ENCODE measurements at regions of chr3 and their contacts with region 1.

Region 1: GRCh38 chr3:58177747-58178527 is 32.8 kb downstream of the DNASE1L3 start:
- DNase-seq: peak; percentile 91
- ATAC-seq: peak; percentile 94
- H3K4me3 Mint-ChIP-seq: peak overlapping the region; percentile 62
- H3K27ac Mint-ChIP-seq: no peak overlapping the region
- H3K4me1 Mint-ChIP-seq: peaks cover 21% of the 10 kb centered on the region
- H3K27me3 Mint-ChIP-seq: peaks cover 6% of the 10 kb centered on the region

Region 2: DNA sequence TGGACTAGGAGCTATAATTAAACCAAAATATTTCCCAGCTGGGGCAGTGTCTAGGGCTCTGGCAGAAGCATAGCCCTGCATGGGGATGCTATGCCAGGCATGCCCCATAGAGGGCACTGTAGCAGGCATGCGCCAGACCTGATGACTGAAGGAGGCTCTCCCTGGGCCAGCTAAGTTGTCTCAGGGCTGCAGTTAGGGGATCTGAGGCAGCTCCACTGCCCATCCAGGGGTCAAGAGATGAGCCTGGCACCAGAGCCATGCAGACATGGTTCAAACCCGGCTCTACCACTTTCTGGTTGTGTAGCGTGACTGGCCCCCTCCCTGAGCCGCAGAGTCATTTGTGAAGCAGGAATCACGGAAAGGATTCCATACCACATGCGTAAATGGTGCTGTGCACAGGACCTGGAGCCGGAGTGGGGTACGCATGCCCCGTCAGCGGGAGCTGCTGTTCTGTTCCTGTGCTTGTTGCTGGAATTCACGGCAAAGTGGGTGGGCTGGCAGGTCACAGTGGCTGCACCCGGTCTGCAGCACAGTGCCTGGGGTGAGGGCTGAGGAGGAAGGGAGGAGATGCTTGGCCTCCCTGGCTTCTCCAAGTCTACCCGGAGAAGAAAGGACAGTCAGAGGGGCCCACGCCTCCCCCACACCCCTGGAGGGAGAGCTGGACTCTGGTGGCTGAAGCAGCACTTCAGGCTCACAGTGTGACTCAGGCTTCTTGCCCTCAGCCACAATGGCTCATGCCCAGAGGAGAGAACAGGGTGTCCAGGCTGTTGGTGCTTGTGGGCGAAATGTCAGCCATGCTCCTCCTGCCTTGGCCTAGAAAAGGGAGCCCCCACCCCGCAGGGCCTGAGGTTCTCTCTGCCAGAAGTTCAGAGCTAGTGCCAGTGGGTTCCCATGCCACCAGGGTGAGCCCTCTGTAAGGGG is 10.2 kb before region 1 on chr3:
- CTCF ChIA-PET with region 1: interaction called, 48 read pairs
- DNase-seq: peak; percentile 73
- ATAC-seq: peak; percentile 91
- H3K4me3 Mint-ChIP-seq: no peak overlapping the region
- H3K27ac Mint-ChIP-seq: no peak overlapping the region
- H3K4me1 Mint-ChIP-seq: no peaks in the 10 kb centered on the region
- H3K27me3 Mint-ChIP-seq: no peaks in the 10 kb centered on the region

Region 3: GRCh38 chr3:58217209-58217811 is 39.4 kb after region 1 on chr3:
- CTCF ChIA-PET with region 1: interaction called, 38 read pairs
- DNase-seq: peak; percentile 65
- ATAC-seq: peak; percentile 81
- H3K4me3 Mint-ChIP-seq: no peak overlapping the region
- H3K27ac Mint-ChIP-seq: no peak overlapping the region
- H3K4me1 Mint-ChIP-seq: peaks cover 31% of the 10 kb centered on the region
- H3K27me3 Mint-ChIP-seq: peaks cover 4% of the 10 kb centered on the region

Region 4: GRCh38 chr3:58332575-58333188 is 154.7 kb after region 1 on chr3 and contains the start of gene PXK:
- CTCF ChIA-PET with region 1: no interaction called
- DNase-seq: peak; percentile 84
- ATAC-seq: peak; percentile 89
- H3K4me3 Mint-ChIP-seq: peak within 1 kb of the TSS; percentile 95
- H3K27ac Mint-ChIP-seq: peak within 1 kb of the TSS; percentile 95
- H3K4me1 Mint-ChIP-seq: peaks cover 33% of the 10 kb centered on the region
- H3K27me3 Mint-ChIP-seq: no peaks in the 10 kb centered on the region
- total RNA-seq, gene PXK: 61.7 to 64.7 TPM

Measured in activated CD8-positive, alpha-beta memory T cell treated with anti-CD3 and anti-CD28 coated beads, Interleukin-2, amount 10 ng/mL, durations not matched to agents 7 days and 5 days (primary cell).